ENCODE measurements at regions of chr9 and their contacts with region 1.

Region 1: DNA sequence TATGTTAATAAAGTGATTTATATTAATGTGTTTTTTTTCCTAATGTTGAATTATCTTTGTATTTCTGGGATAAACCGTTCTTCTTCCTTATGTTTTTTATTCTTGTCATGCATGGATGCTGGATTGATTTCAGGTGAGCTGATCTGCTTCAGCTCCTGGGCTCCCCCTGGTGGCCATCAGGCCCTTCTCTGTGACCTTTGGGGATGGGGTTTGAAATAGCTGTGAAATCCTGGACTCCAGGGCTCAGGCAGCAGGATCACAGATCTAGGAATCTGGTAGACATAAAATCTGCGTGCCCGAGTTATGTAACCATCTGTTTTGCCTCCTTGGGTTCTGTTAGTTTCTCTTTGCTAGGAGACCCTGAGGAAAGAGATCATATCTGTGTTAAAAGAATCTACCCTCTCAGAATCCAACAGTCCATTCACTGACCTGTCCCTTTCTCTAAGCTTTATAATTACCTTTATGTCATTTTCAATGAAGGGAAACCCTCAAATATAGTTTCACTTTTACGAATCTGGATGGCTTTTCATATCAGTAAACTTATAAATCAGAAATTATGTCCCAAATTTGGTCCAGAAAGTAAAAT is 12.2 kb upstream of the OR13J1 start:
- DNase-seq: peak; percentile 68 to 93 (median 84)
- H3K4me3 ChIP-seq: no peak overlapping the region
- H3K27ac ChIP-seq: peak overlapping the region in 6 of 59 donors; percentile 2 to 16 (median 10)
- H3K27me3 ChIP-seq: no peaks in the 10 kb centered on the region
- CTCF ChIP-seq: peak; percentile 80 to 99 (median 97)

Region 2: GRCh38 chr9:35829084-35829763 is 53.1 kb before region 1 on chr9 and contains the start of gene TMEM8B:
- intact Hi-C with region 1: loop called (anchors 5 kb)
- DNase-seq: peak; percentile 94 to 98 (median 97)
- H3K4me3 ChIP-seq: peak within 1 kb of the TSS; percentile 59 to 91 (median 80)
- H3K27ac ChIP-seq: peak within 1 kb of the TSS in 53 of 59 donors; percentile 35 to 95 (median 82)
- H3K27me3 ChIP-seq: no peaks in the 10 kb centered on the region
- CTCF ChIP-seq: peak in 11 of 56 donors; percentile 6 to 41 (median 15)
- total RNA-seq, gene TMEM8B: 40.1 to 83.0 (median 60.2) TPM